ENCODE measurements at regions of chr2 and their contacts with region 1.

Region 1: GRCh38 chr2:25851740-25852503 is 26.4 kb downstream of the ASXL2 start:
- DNase-seq: peak; percentile 68 to 87
- ATAC-seq: peak; percentile 93 to 94
- H3K4me3 ChIP-seq: 0 out of 3 replicates have a peak overlapping the region, but pooled peaks have one; percentile 16
- H3K27ac ChIP-seq: peak overlapping the region; percentile 62 to 86
- H3K4me1 ChIP-seq: peaks cover 15% of the 10 kb centered on the region; the same call in 2 of the 3 replicates
- CTCF ChIP-seq: peak; percentile 97
- EP300 ChIP-seq: no peak
- POLR2A ChIP-seq: no peak
- RAD21 ChIP-seq: peak; percentile 86 to 87

Region 2: GRCh38 chr2:25808006-25808383 is 43.9 kb before region 1 on chr2:
- CTCF ChIA-PET with region 1: interaction called, 14 read pairs
- POLR2A ChIA-PET with region 1: no interaction called
- DNase-seq: no peak
- ATAC-seq: no peak
- H3K4me3 ChIP-seq: no peak overlapping the region
- H3K27ac ChIP-seq: no peak overlapping the region
- H3K4me1 ChIP-seq: no peaks in the 10 kb centered on the region
- CTCF ChIP-seq: no peak
- EP300 ChIP-seq: no peak
- POLR2A ChIP-seq: no peak
- RAD21 ChIP-seq: no peak

Region 3: GRCh38 chr2:25833566-25833965 is 18.4 kb before region 1 on chr2:
- CTCF ChIA-PET with region 1: interaction called, 80 read pairs
- POLR2A ChIA-PET with region 1: no interaction called
- DNase-seq: peak in 1 of 2 experiments; percentile 50
- ATAC-seq: peak; percentile 50 to 65; a peak in 3 of 6 replicates
- H3K4me3 ChIP-seq: no peak overlapping the region
- H3K27ac ChIP-seq: no peak overlapping the region
- H3K4me1 ChIP-seq: peaks cover 35% of the 10 kb centered on the region
- CTCF ChIP-seq: no peak
- EP300 ChIP-seq: no peak
- POLR2A ChIP-seq: no peak
- RAD21 ChIP-seq: no peak

Region 4: GRCh38 chr2:25867396-25868003 is 15.6 kb after region 1 on chr2:
- CTCF ChIA-PET with region 1: interaction called, 130 read pairs
- POLR2A ChIA-PET with region 1: interaction called, 3 read pairs
- DNase-seq: no peak
- ATAC-seq: no peak
- H3K4me3 ChIP-seq: no peak overlapping the region
- H3K27ac ChIP-seq: no peak overlapping the region
- H3K4me1 ChIP-seq: no peaks in the 10 kb centered on the region
- CTCF ChIP-seq: no peak
- EP300 ChIP-seq: no peak
- POLR2A ChIP-seq: no peak
- RAD21 ChIP-seq: no peak

Region 5: GRCh38 chr2:25878361-25879132 is 26.6 kb after region 1 on chr2 and contains the start of gene ASXL2:
- CTCF ChIA-PET with region 1: interaction called, 12 read pairs
- POLR2A ChIA-PET with region 1: interaction called, 11 read pairs
- DNase-seq: peak; percentile 92 to 99
- ATAC-seq: peak; percentile 93
- H3K4me3 ChIP-seq: peak within 1 kb of the TSS; percentile 67
- H3K27ac ChIP-seq: peak within 1 kb of the TSS; percentile 94
- H3K4me1 ChIP-seq: peaks cover 23% of the 10 kb centered on the region
- CTCF ChIP-seq: no peak
- EP300 ChIP-seq: no peak
- POLR2A ChIP-seq: peak; percentile 88
- RAD21 ChIP-seq: no peak
- polyA plus RNA-seq, gene ASXL2: 26.4 and 26.6 TPM in 2 replicates

Region 6: GRCh38 chr2:25936889-25937545 is 85.1 kb after region 1 on chr2:
- CTCF ChIA-PET with region 1: interaction called, 19 read pairs
- POLR2A ChIA-PET with region 1: interaction called, 4 read pairs
- DNase-seq: no peak
- ATAC-seq: no peak; a peak in 1 of 6 replicates
- H3K4me3 ChIP-seq: no peak overlapping the region
- H3K27ac ChIP-seq: no peak overlapping the region; a peak in 1 of 6 replicates
- H3K4me1 ChIP-seq: no peaks in the 10 kb centered on the region
- CTCF ChIP-seq: no peak
- EP300 ChIP-seq: no peak
- POLR2A ChIP-seq: no peak
- RAD21 ChIP-seq: no peak

Region 7: DNA sequence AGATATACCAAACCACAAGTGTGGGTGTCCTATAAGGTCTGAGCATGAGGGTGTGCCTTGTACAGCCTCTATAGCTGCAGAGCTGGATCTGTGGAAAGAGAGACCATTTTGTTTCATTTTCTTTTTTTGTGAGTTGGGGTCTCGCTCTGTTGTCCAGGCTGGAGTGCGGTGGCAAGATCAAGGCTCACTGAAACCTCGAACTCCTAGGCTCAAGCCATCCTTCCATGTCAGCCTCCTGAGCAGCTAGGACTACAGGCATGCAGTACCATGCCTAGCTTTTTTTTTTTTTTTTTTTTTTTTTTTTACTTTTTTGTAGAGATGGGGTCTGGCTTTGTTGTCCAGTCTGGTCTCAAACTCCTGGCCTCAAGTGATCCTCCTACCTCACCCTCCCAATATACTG is 119.7 kb after region 1 on chr2:
- CTCF ChIA-PET with region 1: no interaction called
- POLR2A ChIA-PET with region 1: no interaction called
- DNase-seq: no peak
- ATAC-seq: no peak
- H3K4me3 ChIP-seq: no peak overlapping the region
- H3K27ac ChIP-seq: no peak overlapping the region; a peak in 1 of 6 replicates
- H3K4me1 ChIP-seq: peaks cover 63% of the 10 kb centered on the region
- CTCF ChIP-seq: no peak
- EP300 ChIP-seq: no peak
- POLR2A ChIP-seq: no peak
- RAD21 ChIP-seq: no peak

Region 8: DNA sequence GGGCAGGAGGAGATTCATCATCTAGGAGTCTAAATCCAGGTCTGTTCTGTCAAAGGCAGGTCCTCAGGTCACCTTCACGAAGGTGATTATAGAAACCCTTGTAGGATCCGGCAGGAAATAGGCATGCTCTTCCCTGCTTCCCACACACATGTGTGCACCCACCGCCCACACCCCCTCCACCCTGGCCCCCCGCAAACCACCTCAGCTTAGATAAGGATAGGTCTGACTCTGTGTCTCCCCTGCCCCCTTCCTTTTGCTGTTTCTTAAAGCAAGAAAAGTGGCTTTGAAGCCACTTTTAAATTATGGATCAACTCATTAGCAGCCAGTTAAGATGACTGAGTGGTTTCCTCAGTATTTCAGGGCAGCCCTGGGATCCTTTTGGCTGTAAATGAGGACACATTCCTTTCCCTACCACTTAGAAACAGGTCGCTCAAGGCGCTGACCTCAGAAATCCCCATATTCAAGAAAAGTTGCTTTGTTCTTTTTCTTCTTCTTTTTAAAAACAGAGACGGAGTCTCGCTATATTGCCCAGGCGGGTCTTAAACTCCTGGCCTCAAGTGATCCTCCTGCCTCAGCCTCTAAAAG is 803.8 kb after region 1 on chr2:
- CTCF ChIA-PET with region 1: no interaction called
- POLR2A ChIA-PET with region 1: no interaction called
- DNase-seq: no peak
- ATAC-seq: no peak
- H3K4me3 ChIP-seq: no peak overlapping the region
- H3K27ac ChIP-seq: no peak overlapping the region
- H3K4me1 ChIP-seq: no peaks in the 10 kb centered on the region
- CTCF ChIP-seq: no peak
- EP300 ChIP-seq: no peak
- POLR2A ChIP-seq: no peak
- RAD21 ChIP-seq: no peak